Endothelial cell of umbilical vein (primary cell): ENCODE measurements at regions of chr11 and their contacts with region 1.

Region 1: DNA sequence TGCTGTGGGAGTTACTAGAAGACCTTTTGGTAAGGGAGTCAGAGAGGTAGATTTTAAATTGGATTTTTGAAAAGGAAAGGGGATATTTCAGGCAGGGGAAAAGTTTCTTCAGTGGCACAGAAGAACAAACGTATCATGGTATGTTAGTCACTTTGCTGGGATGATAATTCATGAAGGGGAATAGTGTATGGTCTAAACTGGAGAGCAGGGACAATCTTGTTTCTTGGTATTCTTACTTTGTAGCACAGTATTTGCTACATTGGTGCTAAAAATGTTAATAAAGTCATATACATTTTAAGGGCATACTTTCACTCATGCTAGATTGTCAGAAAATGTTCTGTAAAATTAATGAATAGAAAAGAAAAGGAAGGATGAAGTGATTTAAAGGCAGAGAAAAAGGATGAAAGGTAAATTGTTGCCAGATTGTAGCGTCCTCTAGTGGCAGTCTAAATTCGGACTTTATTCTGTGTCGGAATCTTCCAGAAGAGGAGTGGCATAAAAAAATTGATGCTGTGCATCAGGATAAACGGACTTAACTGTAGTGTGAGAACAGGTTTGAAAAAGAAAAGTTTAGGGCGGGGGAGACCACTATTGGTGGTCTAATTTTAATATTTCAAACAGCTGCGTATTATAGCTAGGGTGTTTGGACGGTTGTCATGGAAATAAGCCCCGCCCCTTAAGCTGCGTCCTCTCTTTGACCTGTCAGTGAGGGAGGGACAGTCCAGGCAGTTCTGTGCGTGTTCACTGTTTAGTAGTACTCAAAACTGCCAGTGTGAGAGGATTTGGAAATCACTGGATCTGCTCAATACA is at the start of gene BCO2:
- DNase-seq: peak; percentile 82
- H3K4me3 ChIP-seq: peak within 1 kb of the TSS; percentile 17 to 68 (median 37)
- H3K27ac ChIP-seq: peak within 1 kb of the TSS; percentile 69
- H3K4me1 ChIP-seq: peaks cover 16% of the 10 kb centered on the region
- H3K27me3 ChIP-seq: peaks cover 4 to 6% of the 10 kb centered on the region in 2 experiments
- CTCF ChIP-seq: peak; percentile 73 to 82
- POLR2A ChIP-seq: no peak
- total RNA-seq, gene BCO2: 1.4 and 1.9 TPM in 2 replicates

Region 2: GRCh38 chr11:112086422-112087191 is 88.4 kb before region 1 on chr11 and contains the starts of genes SDHD and TIMM8B:
- CTCF ChIA-PET with region 1: interaction called, 9 read pairs
- POLR2A ChIA-PET with region 1: no interaction called
- dilution Hi-C with region 1: no loop called
- intact Hi-C with region 1: loop called (anchors 1 kb)
- DNase-seq: peak; percentile 98
- H3K4me3 ChIP-seq: peak within 1 kb of the TSS; percentile 54 to 90 (median 86)
- H3K27ac ChIP-seq: peak within 1 kb of the TSS; percentile 54
- H3K4me1 ChIP-seq: peaks cover 13% of the 10 kb centered on the region
- H3K27me3 ChIP-seq: no peaks in the 10 kb centered on the region
- CTCF ChIP-seq: peak; percentile 17 to 62
- POLR2A ChIP-seq: peak; percentile 52
- total RNA-seq, gene SDHD: 72.3 and 79.0 TPM in 2 replicates
- total RNA-seq, gene TIMM8B: 64.1 and 77.0 TPM in 2 replicates

Region 3: GRCh38 chr11:112121981-112122615 is 52.9 kb before region 1 on chr11:
- CTCF ChIA-PET with region 1: interaction called, 150 read pairs
- POLR2A ChIA-PET with region 1: interaction called, 3 read pairs
- dilution Hi-C with region 1: no loop called
- intact Hi-C with region 1: loop called (anchors 1 kb)
- DNase-seq: no peak
- H3K4me3 ChIP-seq: no peak overlapping the region
- H3K27ac ChIP-seq: no peak overlapping the region
- H3K4me1 ChIP-seq: peaks cover 22% of the 10 kb centered on the region
- H3K27me3 ChIP-seq: no peaks in the 10 kb centered on the region
- CTCF ChIP-seq: no peak
- POLR2A ChIP-seq: no peak

Region 4: DNA sequence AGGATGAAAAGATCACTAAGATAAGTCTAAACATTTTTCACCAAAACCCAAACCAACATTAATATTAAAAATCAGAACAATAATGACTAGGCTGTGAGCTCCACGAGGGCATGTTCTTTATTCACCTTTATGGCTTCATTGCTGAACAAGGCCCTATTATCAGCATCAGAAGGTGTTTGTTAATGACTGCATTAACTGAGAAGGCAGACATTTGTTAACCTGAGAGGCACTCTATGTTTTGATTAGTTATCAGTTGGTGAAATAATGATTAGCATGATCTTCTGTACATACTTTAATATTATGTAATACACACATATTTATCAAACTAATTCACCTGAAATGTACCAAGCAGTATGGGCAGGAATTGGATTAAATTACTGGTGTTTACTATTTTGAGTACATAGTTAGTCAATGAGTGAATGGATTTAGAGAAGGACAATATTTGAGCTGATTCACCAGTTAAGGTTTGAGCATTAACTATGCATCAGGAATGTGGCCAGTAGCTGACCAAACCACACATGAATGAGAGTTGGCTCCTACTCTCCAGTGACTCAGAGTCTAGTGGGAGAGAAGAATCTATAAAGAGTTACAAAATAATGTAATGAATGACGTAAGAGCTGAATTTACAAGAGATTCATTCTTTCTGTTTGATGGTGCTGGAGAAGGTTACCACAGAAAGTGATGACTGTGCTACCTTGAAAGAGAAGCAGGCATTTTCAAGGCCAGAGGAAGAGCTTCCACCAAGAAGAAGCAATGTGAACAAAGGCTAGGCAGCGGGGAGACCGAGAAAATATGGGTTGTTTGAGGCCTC is 17.8 kb before region 1 on chr11:
- CTCF ChIA-PET with region 1: interaction called, 12 read pairs
- POLR2A ChIA-PET with region 1: no interaction called
- dilution Hi-C with region 1: no loop called
- intact Hi-C with region 1: no loop called
- DNase-seq: peak; percentile 82
- H3K4me3 ChIP-seq: no peak overlapping the region
- H3K27ac ChIP-seq: peak overlapping the region; percentile 84
- H3K4me1 ChIP-seq: peaks cover 10% of the 10 kb centered on the region
- H3K27me3 ChIP-seq: no peaks in the 10 kb centered on the region
- CTCF ChIP-seq: no peak
- POLR2A ChIP-seq: no peak

Region 5: GRCh38 chr11:112163875-112164685 is 10.9 kb before region 1 on chr11 and contains the start of gene IL18:
- CTCF ChIA-PET with region 1: interaction called, 13 read pairs
- POLR2A ChIA-PET with region 1: no interaction called
- dilution Hi-C with region 1: no loop called
- intact Hi-C with region 1: no loop called
- DNase-seq: no peak
- H3K4me3 ChIP-seq: peak within 1 kb of the TSS in 1 of 3 experiments; percentile 20
- H3K27ac ChIP-seq: peak within 1 kb of the TSS; percentile 19
- H3K4me1 ChIP-seq: peaks cover 11% of the 10 kb centered on the region
- H3K27me3 ChIP-seq: no peaks in the 10 kb centered on the region
- CTCF ChIP-seq: no peak
- POLR2A ChIP-seq: no peak
- total RNA-seq, gene IL18: 1.5 and 1.6 TPM in 2 replicates